Endothelial cell of umbilical vein (primary cell): ENCODE measurements at regions of chr17 and their contacts with region 1.

Region 1: DNA sequence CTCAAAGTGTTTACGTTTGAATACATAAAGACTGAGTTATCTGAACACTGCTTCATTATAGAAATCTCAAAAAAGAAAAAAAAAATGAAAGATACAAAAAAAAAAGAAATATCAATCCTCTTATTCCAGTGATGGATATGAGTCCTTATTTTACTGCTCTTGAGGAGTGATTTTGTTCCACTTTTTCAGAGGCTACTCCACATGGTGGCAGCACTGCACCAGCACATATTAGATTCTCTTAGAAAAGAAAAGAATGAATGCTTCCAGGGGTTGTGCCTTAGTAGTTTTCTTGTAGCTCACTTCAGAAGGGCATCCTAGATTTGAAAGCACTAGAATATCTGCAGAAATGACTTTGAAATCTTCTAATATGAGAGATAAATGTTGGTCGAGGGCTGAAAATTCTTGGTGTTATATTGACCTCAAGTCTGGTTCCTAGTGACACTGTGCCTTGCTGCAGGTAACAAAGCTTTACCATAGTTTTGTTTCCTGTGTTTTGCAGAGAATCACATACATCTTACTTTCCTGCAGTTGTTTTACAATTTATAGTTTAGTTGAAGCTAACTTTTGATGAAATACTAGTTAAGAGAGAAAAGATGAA is 25.9 kb downstream of the AP2B1 start:
- DNase-seq: peak; percentile 71
- H3K4me3 ChIP-seq: no peak overlapping the region
- H3K27ac ChIP-seq: no peak overlapping the region
- H3K4me1 ChIP-seq: peaks cover 5% of the 10 kb centered on the region
- H3K27me3 ChIP-seq: no peaks in the 10 kb centered on the region
- CTCF ChIP-seq: peak; percentile 53 to 57
- POLR2A ChIP-seq: no peak

Region 2: DNA sequence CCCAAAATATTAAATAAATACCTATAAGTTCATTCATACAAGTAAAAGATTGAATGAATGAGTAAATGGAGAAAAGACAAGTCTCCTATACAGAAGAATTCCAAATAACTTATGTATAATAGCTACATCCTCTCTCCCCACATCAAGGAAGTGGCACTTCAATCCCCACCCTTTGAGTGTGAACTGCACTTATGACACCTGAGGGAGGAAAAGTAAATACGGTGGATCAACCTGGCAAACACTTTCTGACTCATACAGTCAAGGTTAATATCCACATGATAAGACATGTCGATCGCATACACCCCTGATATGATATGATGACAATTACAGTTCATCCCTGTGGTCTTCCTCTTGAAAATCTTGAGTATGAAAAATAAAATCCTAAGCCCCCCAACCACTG is 93.6 kb before region 1 on chr17:
- CTCF ChIA-PET with region 1: no interaction called
- POLR2A ChIA-PET with region 1: no interaction called
- dilution Hi-C with region 1: no loop called
- intact Hi-C with region 1: no loop called
- DNase-seq: no peak
- H3K4me3 ChIP-seq: no peak overlapping the region
- H3K27ac ChIP-seq: no peak overlapping the region
- H3K4me1 ChIP-seq: peaks cover 10% of the 10 kb centered on the region
- H3K27me3 ChIP-seq: peaks cover 21 to 42% of the 10 kb centered on the region in 2 experiments
- CTCF ChIP-seq: no peak
- POLR2A ChIP-seq: no peak

Region 3: GRCh38 chr17:35568541-35568940 is 44.5 kb before region 1 on chr17:
- CTCF ChIA-PET with region 1: no interaction called
- POLR2A ChIA-PET with region 1: no interaction called
- dilution Hi-C with region 1: no loop called
- intact Hi-C with region 1: no loop called
- DNase-seq: peak; percentile 54
- H3K4me3 ChIP-seq: peak overlapping the region; percentile 72 to 94 (median 72)
- H3K27ac ChIP-seq: peak overlapping the region; percentile 83
- H3K4me1 ChIP-seq: peaks cover 10% of the 10 kb centered on the region
- H3K27me3 ChIP-seq: peaks cover 7 to 12% of the 10 kb centered on the region in 2 experiments
- CTCF ChIP-seq: no peak
- POLR2A ChIP-seq: no peak

Region 4: DNA sequence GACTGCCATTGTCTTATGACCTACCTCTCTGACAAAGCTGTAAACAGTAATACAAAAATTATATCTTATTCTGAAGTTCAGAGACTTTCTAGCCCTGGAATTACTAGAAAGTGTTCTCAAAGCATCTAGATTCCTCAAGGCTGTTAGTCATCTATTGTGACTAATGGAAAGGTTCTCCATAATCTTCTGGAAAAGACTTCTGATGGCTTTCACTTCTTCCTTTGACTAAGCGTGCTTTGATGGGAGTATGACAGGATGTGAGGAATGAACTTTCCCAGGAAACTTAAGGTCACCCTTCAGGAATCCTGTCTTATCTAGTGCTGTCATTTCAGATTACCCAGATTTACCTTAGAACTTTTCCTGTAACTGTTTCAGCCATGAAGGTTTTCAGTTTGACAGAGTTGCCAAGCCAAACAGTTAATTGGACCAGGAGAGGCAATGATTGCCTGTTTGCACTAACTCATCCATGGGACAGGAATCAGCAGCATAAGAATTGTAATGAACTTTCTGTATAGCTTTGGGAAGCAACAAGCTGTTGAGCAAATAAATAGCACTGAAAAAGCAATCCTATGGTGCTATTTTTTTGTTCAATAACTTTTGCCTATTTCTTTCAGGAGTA is 17.6 kb after region 1 on chr17:
- CTCF ChIA-PET with region 1: interaction called, 11 read pairs
- POLR2A ChIA-PET with region 1: no interaction called
- dilution Hi-C with region 1: no loop called
- intact Hi-C with region 1: loop called (anchors 2 kb)
- DNase-seq: peak; percentile 79
- H3K4me3 ChIP-seq: no peak overlapping the region
- H3K27ac ChIP-seq: peak overlapping the region; percentile 41
- H3K4me1 ChIP-seq: peaks cover 17% of the 10 kb centered on the region
- H3K27me3 ChIP-seq: no peaks in the 10 kb centered on the region
- CTCF ChIP-seq: no peak
- POLR2A ChIP-seq: peak; percentile 36

Region 5: GRCh38 chr17:35645923-35646322 is 32.9 kb after region 1 on chr17:
- CTCF ChIA-PET with region 1: interaction called, 11 read pairs
- POLR2A ChIA-PET with region 1: no interaction called
- dilution Hi-C with region 1: no loop called
- intact Hi-C with region 1: no loop called
- DNase-seq: no peak
- H3K4me3 ChIP-seq: no peak overlapping the region
- H3K27ac ChIP-seq: no peak overlapping the region
- H3K4me1 ChIP-seq: no peaks in the 10 kb centered on the region
- H3K27me3 ChIP-seq: no peaks in the 10 kb centered on the region
- CTCF ChIP-seq: no peak
- POLR2A ChIP-seq: no peak

Region 6: DNA sequence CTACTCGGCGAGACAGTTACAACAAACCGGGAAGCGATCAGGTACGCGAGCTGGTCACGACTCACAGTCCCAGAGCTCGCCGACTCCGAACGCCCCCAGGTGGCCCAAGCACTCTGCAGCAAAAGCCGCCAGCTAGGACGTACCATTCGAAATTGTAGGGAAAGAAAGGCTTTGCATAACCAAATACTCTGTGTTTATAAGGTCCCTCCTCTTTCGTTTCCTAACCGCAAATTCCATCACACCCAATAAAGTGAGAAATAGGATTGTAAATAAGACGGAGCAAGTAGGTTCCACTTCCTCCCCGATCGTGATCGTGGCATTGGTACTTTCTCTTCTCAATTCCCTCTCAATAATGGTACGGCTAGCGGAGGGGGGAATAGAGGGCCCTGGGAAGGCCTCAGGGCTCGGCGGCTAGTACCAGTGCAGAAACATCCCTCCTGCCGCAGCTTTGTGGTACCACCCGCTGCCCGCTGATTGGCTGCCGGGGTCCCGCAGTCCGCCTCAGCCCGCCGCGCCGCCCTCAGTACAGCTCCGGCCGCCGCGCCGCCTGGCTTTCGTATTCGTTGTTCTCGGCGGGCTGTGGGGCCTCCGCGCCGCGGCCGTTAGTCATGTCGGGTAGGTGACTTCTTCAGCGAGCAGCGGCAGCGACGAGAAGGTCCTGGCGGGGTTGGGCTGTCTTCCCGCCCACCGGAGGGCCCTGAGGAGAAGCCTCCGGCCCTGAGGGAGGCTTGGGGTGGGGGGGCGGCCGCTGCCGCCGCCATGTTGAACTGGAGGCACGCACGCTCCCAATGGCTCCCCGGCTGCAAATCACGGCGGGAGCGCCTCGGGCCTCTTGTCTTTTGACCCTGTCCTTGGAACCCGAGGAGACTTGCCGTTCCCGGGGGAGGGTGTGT is 196.2 kb after region 1 on chr17 and contains the start of gene TAF15:
- CTCF ChIA-PET with region 1: interaction called, 8 read pairs
- POLR2A ChIA-PET with region 1: no interaction called
- dilution Hi-C with region 1: no loop called
- intact Hi-C with region 1: loop called (anchors 2 kb)
- DNase-seq: peak; percentile 98
- H3K4me3 ChIP-seq: peak within 1 kb of the TSS; percentile 56 to 96 (median 81)
- H3K27ac ChIP-seq: peak within 1 kb of the TSS; percentile 90
- H3K4me1 ChIP-seq: peaks cover 35% of the 10 kb centered on the region
- H3K27me3 ChIP-seq: no peaks in the 10 kb centered on the region
- CTCF ChIP-seq: peak; percentile 77 to 85
- POLR2A ChIP-seq: peak; percentile 98
- total RNA-seq, gene TAF15: 244 and 247 TPM in 2 replicates